Activated naive CD4-positive, alpha-beta T cell treated with anti-CD3 and anti-CD28 coated beads for 36 hours (primary cell): ENCODE measurements at regions of chr4 and their contacts with region 1.

Region 1: GRCh38 chr4:40897557-40898203 is 147.9 kb downstream of the NSUN7 start:
- DNase-seq: peak; percentile 79
- H3K4me3 Mint-ChIP-seq: peak overlapping the region; percentile 62
- H3K27ac Mint-ChIP-seq: peak overlapping the region; percentile 59
- H3K4me1 Mint-ChIP-seq: peaks cover 4% of the 10 kb centered on the region
- H3K27me3 Mint-ChIP-seq: no peaks in the 10 kb centered on the region

Region 2: DNA sequence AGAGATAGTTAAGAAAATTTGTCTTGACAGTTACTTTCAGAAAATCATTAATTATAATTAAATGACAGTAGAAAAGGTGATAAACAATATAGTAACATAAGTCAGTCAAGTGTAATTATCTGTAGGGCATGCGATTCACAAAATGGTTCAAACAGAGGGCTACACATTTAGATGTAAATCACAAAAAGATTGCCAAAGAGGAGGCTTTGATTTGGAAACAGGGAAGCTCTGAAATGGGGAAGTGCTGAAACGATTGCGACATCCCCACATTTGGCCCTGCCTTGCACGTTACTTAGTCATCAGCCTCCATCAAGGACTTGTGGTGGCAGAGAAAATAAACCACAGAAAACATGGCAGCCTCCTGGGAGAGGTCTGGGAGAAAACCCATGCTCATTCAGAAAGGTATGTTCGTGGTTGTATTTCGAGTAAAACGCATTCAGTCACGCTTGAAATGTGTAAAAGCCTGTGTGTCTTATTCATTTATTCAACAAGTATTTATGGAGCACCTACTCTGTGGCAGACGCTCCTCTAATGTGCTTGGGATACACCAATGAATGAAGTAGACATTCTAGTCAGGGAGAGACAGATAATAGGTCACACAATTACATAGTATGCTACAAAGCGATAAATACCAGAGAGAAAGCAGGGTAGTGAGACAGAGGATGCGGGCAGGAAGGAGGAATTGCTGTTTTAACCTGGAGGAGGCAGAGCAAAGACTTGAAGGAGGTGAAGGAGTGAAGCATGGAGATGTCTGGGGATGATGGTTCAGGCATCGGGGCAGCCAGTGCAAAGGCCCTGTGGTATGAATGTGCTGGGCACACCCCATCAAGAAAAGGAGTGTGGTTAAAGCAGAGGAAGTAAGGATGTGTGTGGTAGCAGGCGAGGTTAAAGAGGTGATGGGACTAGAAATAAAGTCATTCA is 275.8 kb before region 1 on chr4:
- CTCF ChIA-PET with region 1: no interaction called
- intact Hi-C with region 1: no loop called
- DNase-seq: peak; percentile 57
- H3K4me3 Mint-ChIP-seq: no peak overlapping the region
- H3K27ac Mint-ChIP-seq: no peak overlapping the region
- H3K4me1 Mint-ChIP-seq: peaks cover 15% of the 10 kb centered on the region
- H3K27me3 Mint-ChIP-seq: peaks cover 8% of the 10 kb centered on the region

Region 3: GRCh38 chr4:40710502-40711254 is 187.0 kb before region 1 on chr4:
- CTCF ChIA-PET with region 1: no interaction called
- intact Hi-C with region 1: no loop called
- DNase-seq: no peak
- H3K4me3 Mint-ChIP-seq: no peak overlapping the region
- H3K27ac Mint-ChIP-seq: no peak overlapping the region
- H3K4me1 Mint-ChIP-seq: no peaks in the 10 kb centered on the region
- H3K27me3 Mint-ChIP-seq: peaks cover 7% of the 10 kb centered on the region

Region 4: GRCh38 chr4:40736910-40737309 is 160.8 kb before region 1 on chr4:
- CTCF ChIA-PET with region 1: interaction called, 6 read pairs
- intact Hi-C with region 1: loop called (anchors 1 kb)
- DNase-seq: peak; percentile 18
- H3K4me3 Mint-ChIP-seq: no peak overlapping the region
- H3K27ac Mint-ChIP-seq: no peak overlapping the region
- H3K4me1 Mint-ChIP-seq: peaks cover 9% of the 10 kb centered on the region
- H3K27me3 Mint-ChIP-seq: peaks cover 2% of the 10 kb centered on the region

Region 5: GRCh38 chr4:40881096-40881495 is 16.6 kb before region 1 on chr4:
- CTCF ChIA-PET with region 1: interaction called, 23 read pairs
- intact Hi-C with region 1: no loop called
- DNase-seq: no peak
- H3K4me3 Mint-ChIP-seq: no peak overlapping the region
- H3K27ac Mint-ChIP-seq: no peak overlapping the region
- H3K4me1 Mint-ChIP-seq: no peaks in the 10 kb centered on the region
- H3K27me3 Mint-ChIP-seq: peaks cover 14% of the 10 kb centered on the region

Region 6: DNA sequence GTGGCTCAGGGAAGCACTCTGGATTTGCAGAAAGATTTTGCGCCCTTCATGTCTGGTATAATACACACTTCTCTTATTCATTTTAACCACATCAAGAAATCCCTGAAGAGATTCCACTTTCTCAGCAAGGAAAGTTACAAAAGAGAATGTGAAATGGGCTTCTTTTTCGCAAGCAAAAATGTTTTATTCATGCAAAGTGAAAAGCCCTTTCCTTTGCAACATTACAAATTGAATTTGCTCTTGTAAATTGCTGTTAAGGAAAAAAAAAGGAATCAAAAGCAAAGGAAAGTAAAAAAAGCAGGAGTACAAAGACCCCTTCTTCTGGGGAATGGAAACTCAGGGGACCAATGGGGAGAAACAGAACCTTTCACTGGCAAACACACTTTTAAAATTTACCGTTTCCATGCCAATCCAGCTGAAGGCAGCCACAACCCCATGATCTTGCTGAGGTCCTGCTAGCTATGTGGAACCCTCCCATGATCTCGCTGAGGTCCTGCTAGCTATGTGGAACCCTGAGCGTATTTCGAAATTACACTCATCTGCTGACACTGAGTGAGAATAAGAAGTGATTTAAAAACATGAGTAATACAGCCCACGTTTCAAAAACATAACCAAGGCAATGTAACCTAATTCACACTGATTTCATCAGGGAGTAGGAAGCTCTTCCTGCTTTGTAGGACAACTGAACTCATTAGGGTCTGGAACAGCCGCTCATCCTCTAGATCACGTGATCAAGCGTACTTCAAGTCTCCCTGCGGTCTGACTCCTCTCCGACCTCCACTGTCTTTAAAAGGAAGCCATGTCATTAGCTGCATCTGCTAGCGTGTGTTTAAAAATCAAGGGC is 10.2 kb before region 1 on chr4:
- CTCF ChIA-PET with region 1: interaction called, 23 read pairs
- intact Hi-C with region 1: no loop called
- DNase-seq: no peak
- H3K4me3 Mint-ChIP-seq: no peak overlapping the region
- H3K27ac Mint-ChIP-seq: no peak overlapping the region
- H3K4me1 Mint-ChIP-seq: no peaks in the 10 kb centered on the region
- H3K27me3 Mint-ChIP-seq: peaks cover 3% of the 10 kb centered on the region